Activated CD4-positive, alpha-beta memory T cell treated with anti-CD3 and anti-CD28 coated beads for 36 hours (primary cell): ENCODE measurements at regions of chr11 and their contacts with region 1.

Region 1: DNA sequence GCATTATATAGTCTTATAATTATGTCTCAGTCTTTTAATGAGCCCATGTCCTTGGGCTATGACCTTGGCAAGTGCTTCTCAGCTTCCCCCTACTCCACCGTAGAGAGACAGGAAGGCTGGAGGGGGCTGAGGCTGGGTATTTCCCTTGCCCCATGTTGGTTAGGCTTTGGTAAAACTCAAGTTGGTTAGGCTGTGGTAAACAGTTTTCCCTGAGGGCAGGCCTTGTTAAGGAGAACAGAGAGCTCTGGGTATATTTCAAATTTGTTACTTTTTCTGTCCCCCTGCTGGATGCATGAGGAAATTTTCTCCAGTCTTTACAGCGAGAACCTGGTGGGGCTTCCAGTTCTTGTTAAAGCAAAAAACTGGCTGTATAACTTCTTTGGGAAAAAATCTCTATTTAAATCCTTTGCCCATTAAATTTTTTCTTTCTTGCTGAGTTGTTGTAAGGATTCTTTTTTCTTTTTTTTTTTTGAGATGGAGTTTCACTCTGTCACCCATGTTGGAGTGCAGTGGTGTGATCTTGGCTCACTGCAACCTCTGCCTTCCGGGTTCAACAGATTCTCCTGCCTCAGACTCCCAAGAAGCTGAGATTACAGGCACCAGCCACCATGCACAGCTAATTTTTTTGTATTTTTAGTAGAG is 12.2 kb upstream of the DCHS1 start:
- DNase-seq: peak; percentile 66
- H3K4me3 Mint-ChIP-seq: no peak overlapping the region
- H3K27ac Mint-ChIP-seq: peak overlapping the region; percentile 50
- H3K4me1 Mint-ChIP-seq: peaks cover 60% of the 10 kb centered on the region
- H3K27me3 Mint-ChIP-seq: no peaks in the 10 kb centered on the region

Region 2: GRCh38 chr11:6531267-6531752 is 136.5 kb before region 1 on chr11:
- CTCF ChIA-PET with region 1: interaction called, 22 read pairs
- POLR2A ChIA-PET with region 1: no interaction called
- intact Hi-C with region 1: loop called (anchors 1 kb)
- DNase-seq: no peak
- H3K4me3 Mint-ChIP-seq: no peak overlapping the region
- H3K27ac Mint-ChIP-seq: no peak overlapping the region
- H3K4me1 Mint-ChIP-seq: peaks cover 11% of the 10 kb centered on the region
- H3K27me3 Mint-ChIP-seq: no peaks in the 10 kb centered on the region

Region 3: DNA sequence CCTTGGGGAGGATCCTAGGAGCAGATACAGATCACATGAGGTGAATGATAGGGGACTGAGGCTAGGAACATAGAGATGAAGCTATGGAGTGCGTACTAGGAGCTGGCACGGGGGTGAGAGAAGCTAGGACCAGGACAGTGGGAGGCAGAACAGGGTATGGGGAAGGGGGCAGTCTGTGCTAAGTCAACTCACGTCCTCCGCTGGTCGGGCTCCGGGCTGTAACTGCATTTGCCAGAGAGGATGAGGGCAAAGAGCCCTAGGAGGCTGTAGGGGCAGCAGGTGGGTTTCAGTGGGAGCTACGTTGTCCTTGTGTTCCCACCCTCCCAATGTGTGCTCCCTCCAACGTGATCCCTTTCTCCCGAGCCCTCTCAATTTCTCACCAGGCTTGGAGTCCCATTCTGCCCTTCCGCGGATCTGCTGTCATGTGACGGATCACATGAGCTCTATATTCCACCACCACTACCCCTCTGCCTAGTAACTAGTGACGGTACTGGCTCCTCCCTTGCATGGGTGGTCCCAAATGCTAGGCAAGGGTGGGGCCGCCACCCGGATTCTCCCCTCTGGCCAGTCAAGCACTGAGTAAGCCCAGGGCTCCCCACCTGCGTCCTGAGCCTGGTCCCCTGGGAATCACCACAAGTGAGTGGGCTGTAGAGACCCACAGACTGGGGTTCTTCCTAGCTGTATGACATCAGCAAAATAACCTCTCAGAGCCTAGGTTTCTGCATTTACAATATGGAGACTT is 48.7 kb before region 1 on chr11 and contains the start of gene TPP1:
- CTCF ChIA-PET with region 1: interaction called, 18 read pairs
- POLR2A ChIA-PET with region 1: no interaction called
- intact Hi-C with region 1: loop called (anchors 1 kb)
- DNase-seq: peak; percentile 93
- H3K4me3 Mint-ChIP-seq: no peak within 1 kb of the TSS
- H3K27ac Mint-ChIP-seq: no peak within 1 kb of the TSS
- H3K4me1 Mint-ChIP-seq: peaks cover 10% of the 10 kb centered on the region
- H3K27me3 Mint-ChIP-seq: no peaks in the 10 kb centered on the region
- total RNA-seq, gene TPP1: 53.2 to 56.6 TPM

Region 4: DNA sequence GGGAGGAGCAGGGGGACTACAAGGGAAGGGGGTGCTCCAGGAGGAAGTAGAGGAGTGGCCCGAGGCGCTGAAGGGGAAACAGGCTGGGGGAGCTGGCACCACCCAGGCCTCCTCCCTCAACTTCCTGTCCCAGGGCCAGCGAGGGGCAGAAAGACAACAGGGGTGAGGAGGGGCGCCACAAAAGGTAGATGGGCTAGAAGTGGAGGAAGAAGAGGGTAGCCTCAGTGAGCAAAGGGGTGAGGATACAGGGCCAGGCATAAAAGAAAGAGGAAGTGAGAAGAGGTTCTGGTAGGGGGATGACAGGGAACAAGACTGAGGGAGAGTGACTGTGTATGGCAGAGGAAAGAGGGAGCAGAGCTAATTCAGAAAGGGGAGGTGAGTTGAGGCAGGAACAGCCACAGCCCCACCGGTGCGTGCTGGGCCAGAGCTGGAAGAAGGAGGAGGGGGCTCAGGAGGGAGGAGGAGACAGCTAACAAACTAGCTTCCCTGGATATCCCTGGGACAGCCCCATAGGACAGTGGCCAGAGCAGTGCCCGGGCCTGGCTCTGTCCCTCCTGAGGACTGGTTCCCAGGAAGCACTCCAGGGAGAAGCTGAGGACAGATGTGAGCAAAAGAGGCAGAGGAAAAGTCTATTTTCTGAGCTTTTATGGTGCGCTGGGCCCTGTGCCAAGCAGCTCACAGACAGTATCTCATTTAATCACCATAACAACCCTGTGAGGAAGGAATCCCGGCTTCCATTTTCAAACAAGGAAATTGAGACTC is 20.8 kb before region 1 on chr11:
- CTCF ChIA-PET with region 1: interaction called, 14 read pairs
- POLR2A ChIA-PET with region 1: interaction called, 4 read pairs
- intact Hi-C with region 1: loop called (anchors 2 kb)
- DNase-seq: peak; percentile 49
- H3K4me3 Mint-ChIP-seq: no peak overlapping the region
- H3K27ac Mint-ChIP-seq: no peak overlapping the region
- H3K4me1 Mint-ChIP-seq: no peaks in the 10 kb centered on the region
- H3K27me3 Mint-ChIP-seq: no peaks in the 10 kb centered on the region

Region 5: GRCh38 chr11:6693342-6694228 is 25.7 kb after region 1 on chr11:
- CTCF ChIA-PET with region 1: interaction called, 6 read pairs
- POLR2A ChIA-PET with region 1: no interaction called
- intact Hi-C with region 1: loop called (anchors 2 kb)
- DNase-seq: peak; percentile 83
- H3K4me3 Mint-ChIP-seq: peak overlapping the region; percentile 4
- H3K27ac Mint-ChIP-seq: peak overlapping the region; percentile 72
- H3K4me1 Mint-ChIP-seq: peaks cover 42% of the 10 kb centered on the region
- H3K27me3 Mint-ChIP-seq: no peaks in the 10 kb centered on the region